WTC11 (cell line): ENCODE measurements at regions of chr19 and their contacts with region 1.

Region 1: GRCh38 chr19:15091901-15092753 is 10.1 kb downstream of the OR1I1 start:
- DNase-seq: peak; percentile 35
- ATAC-seq: peak; percentile 76
- H3K4me3 Mint-ChIP-seq: no peak overlapping the region
- H3K27ac Mint-ChIP-seq: no peak overlapping the region
- H3K4me1 Mint-ChIP-seq: no peaks in the 10 kb centered on the region
- H3K27me3 Mint-ChIP-seq: peaks cover 8% of the 10 kb centered on the region
- CTCF ChIP-seq: peak; percentile 69

Region 2: DNA sequence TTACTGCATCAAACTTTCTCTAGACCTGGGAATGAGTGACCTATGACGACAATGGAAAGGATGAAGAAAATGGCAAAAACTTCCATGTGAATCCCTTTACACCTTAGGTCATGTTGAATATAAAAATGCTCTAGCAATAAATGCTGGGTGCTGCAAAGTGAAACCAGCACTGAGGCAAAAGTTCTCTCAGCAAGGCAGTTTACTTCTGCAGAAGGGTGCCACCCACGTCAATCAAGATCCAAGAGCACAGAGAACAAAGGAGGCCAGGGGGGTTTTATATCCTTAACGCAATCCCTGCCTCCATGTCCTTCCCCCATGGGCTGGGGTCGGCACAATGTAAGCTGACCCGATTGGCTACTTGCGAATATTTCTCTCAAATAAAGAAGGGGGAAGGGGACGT is 363.5 kb before region 1 on chr19:
- CTCF ChIA-PET with region 1: no interaction called
- POLR2A ChIA-PET with region 1: no interaction called
- DNase-seq: no peak
- ATAC-seq: no peak
- H3K4me3 Mint-ChIP-seq: no peak overlapping the region
- H3K27ac Mint-ChIP-seq: no peak overlapping the region
- H3K4me1 Mint-ChIP-seq: peaks cover 6% of the 10 kb centered on the region
- H3K27me3 Mint-ChIP-seq: peaks cover 21% of the 10 kb centered on the region
- CTCF ChIP-seq: no peak

Region 3: DNA sequence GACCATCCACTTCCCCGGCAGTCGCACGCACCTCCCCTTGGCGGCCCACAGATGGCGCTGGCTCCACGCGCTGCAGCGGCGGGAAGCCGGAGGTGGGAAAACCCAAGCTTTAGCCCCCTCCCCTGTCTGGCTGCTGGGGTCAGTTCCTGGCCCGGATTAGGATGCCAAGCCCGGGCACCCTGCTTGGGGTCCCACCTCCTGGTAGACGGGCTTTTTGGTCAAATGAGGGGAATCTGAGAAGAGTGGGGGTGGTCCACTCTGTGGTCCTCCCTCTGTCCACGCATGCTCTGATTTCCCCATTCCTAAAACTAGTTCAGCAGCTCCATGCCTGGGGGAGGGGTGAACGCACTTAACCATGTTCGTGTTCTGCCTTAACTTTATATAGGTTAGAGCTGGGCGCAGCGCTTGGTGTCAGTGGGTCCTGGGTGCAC is 305.7 kb before region 1 on chr19:
- CTCF ChIA-PET with region 1: interaction called, 10 read pairs
- POLR2A ChIA-PET with region 1: no interaction called
- DNase-seq: peak; percentile 78
- ATAC-seq: peak; percentile 94
- H3K4me3 Mint-ChIP-seq: peak overlapping the region; percentile 53
- H3K27ac Mint-ChIP-seq: peak overlapping the region; percentile 70; the same call in 1 of the 2 replicates
- H3K4me1 Mint-ChIP-seq: peaks cover 10% of the 10 kb centered on the region
- H3K27me3 Mint-ChIP-seq: 0 out of 2 replicates have a peak, but pooled peaks cover 4% of the 10 kb centered on the region
- CTCF ChIP-seq: peak; percentile 84

Region 4: DNA sequence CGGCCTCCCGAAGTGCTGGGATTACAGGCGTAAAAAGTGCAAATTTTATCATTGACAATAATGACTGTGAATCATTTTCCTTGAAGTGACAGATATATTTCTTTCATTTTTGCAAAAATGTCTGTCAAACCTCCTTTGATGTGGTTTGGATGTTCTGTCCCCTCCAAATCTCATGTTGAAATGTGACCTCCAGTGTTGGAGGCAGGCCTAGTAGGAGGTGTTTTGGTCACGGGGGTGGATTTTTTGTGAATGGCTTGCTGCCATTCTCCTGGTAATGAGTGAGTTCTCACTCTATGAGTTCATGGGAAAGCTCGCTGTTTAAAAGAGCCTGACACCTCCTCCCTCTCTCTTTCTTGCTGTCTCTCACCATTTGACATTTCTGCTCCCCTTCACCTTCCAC is 107.0 kb before region 1 on chr19:
- CTCF ChIA-PET with region 1: no interaction called
- POLR2A ChIA-PET with region 1: no interaction called
- DNase-seq: no peak
- ATAC-seq: no peak
- H3K4me3 Mint-ChIP-seq: no peak overlapping the region
- H3K27ac Mint-ChIP-seq: no peak overlapping the region
- H3K4me1 Mint-ChIP-seq: peaks cover 2% of the 10 kb centered on the region; the same call in 1 of the 2 replicates
- H3K27me3 Mint-ChIP-seq: peaks cover 20% of the 10 kb centered on the region
- CTCF ChIP-seq: no peak

Region 5: DNA sequence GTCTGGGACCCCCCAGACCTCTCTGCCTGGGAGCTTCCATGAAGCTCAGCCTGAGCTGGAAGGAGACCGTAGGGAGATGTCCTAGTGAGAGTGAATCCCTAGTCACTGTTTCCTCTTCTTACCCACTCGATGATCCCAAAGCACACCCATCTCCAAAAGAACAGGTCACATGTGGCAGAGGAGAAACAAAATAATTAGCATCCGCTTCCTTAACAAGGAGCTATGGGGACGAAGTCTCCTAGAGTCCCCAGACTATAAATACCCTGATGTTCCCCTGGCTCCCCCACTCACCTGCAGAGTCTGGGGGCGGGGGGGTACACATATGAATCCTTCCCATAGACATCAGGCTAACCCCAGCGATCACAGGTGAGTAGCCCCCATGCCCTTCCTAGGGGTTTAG is 10.2 kb before region 1 on chr19 and contains the start of gene OR1I1:
- CTCF ChIA-PET with region 1: interaction called, 15 read pairs
- POLR2A ChIA-PET with region 1: interaction called, 6 read pairs
- DNase-seq: no peak
- ATAC-seq: no peak
- H3K4me3 Mint-ChIP-seq: no peak within 1 kb of the TSS
- H3K27ac Mint-ChIP-seq: no peak within 1 kb of the TSS
- H3K4me1 Mint-ChIP-seq: no peaks in the 10 kb centered on the region
- H3K27me3 Mint-ChIP-seq: peaks cover 13% of the 10 kb centered on the region
- CTCF ChIP-seq: no peak
- total RNA-seq, gene OR1I1: not detected in 3 replicates

Region 6: DNA sequence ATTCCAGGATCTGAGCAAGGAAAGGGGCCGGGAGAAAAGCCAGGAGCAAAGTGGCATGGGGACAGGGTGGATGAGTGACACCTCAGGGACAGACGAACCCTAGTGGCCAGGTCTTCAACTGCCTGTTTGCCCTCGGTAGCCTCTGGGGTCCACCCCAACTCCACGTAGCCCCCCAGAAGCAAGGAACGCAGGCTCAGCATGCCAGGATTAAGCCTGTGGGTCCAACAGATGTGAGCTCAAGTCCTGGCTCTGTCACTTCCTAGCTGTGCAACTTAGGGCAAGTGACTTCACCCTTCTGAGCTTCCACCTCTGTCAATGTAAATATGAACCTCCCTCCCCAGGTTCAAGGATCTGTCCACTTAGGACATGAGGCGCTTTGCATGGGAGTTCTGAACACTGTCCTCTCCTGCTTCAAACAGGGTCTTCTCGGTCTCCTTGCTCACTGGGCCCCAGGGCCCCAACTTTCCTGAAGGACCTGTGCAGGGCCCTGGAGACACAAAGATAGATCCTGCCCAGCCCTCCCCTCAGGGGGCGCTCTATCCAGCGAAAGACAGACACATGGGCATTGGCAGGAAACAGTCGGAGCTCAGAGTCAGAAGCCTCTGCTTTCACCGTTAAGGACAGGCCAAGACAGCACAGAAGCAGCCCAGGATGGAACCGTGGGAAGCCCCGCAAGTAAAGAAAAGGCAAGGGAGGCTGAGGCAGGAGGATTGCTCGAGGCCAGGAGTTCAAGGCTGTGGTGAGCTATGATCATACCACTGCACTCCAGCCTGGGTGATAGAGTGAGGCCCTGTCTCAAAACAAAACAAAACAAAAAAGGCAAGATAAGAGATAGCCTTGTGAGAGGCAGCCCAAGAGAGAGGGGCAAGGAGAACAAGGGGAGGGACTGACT is 28.3 kb after region 1 on chr19:
- CTCF ChIA-PET with region 1: interaction called, 15 read pairs
- POLR2A ChIA-PET with region 1: no interaction called
- DNase-seq: peak; percentile 49
- ATAC-seq: no peak
- H3K4me3 Mint-ChIP-seq: no peak overlapping the region
- H3K27ac Mint-ChIP-seq: no peak overlapping the region; the same call in 1 of the 2 replicates
- H3K4me1 Mint-ChIP-seq: peaks cover 5% of the 10 kb centered on the region; the same call in 1 of the 2 replicates
- H3K27me3 Mint-ChIP-seq: no peaks in the 10 kb centered on the region
- CTCF ChIP-seq: peak; percentile 23; the same call in 1 of the 2 replicates

Region 7: GRCh38 chr19:15154002-15154612 is 62.0 kb after region 1 on chr19:
- CTCF ChIA-PET with region 1: interaction called, 54 read pairs
- POLR2A ChIA-PET with region 1: no interaction called
- DNase-seq: peak; percentile 82
- ATAC-seq: peak; percentile 75
- H3K4me3 Mint-ChIP-seq: no peak overlapping the region
- H3K27ac Mint-ChIP-seq: no peak overlapping the region
- H3K4me1 Mint-ChIP-seq: no peaks in the 10 kb centered on the region; the same call in 1 of the 2 replicates
- H3K27me3 Mint-ChIP-seq: peaks cover 3% of the 10 kb centered on the region; the same call in 1 of the 2 replicates
- CTCF ChIP-seq: peak; percentile 55

Region 8: GRCh38 chr19:15555759-15556633 is 463.9 kb after region 1 on chr19:
- CTCF ChIA-PET with region 1: interaction called, 11 read pairs
- POLR2A ChIA-PET with region 1: no interaction called
- DNase-seq: peak; percentile 99
- ATAC-seq: peak; percentile 89
- H3K4me3 Mint-ChIP-seq: peak overlapping the region; percentile 61
- H3K27ac Mint-ChIP-seq: peak overlapping the region; percentile 79
- H3K4me1 Mint-ChIP-seq: peaks cover 6% of the 10 kb centered on the region
- H3K27me3 Mint-ChIP-seq: peaks cover 41% of the 10 kb centered on the region
- CTCF ChIP-seq: peak; percentile 83